Aorta (tissue), 5 donors: ENCODE measurements at regions of chr14 and their contacts with region 1.

Region 1: DNA sequence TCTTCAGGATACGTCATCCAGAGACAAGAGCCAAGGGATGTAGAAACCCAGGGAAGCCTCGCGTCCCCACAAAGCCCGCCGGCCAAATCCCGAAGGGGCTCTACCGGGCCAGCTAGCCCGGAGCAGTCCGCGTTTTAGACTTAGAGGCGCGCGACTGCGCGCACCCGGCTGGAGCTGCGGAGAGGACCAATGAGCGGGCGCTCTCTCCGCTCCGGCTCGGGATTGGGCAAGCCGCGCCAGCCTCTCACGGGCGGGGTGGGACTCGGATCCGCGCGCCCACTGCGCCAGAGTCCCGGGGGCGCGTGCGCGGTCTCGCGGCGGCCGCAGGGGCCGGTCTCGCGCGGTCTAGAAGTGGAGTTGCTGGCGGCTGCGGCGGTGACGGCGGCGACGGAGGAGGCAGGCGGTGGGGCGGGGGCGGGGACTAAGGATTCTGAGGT is 239 bp upstream of the PALS1 start:
- DNase-seq: peak; percentile 98 to 99
- ATAC-seq: peak; percentile 99
- H3K4me3 ChIP-seq: peak overlapping the region; percentile 60 to 76
- H3K27ac ChIP-seq: peak overlapping the region in 1 of 2 donors; percentile 74
- H3K4me1 ChIP-seq: no peaks in the 10 kb centered on the region
- H3K27me3 ChIP-seq: no peaks in the 10 kb centered on the region

Region 2: GRCh38 chr14:66509874-66510273 is 731.1 kb before region 1 on chr14:
- intact Hi-C with region 1: loop called in 1 of 2 experiments (anchors 5 kb)
- DNase-seq: no peak
- ATAC-seq: no peak
- H3K4me3 ChIP-seq: peak overlapping the region; percentile 80 to 81
- H3K27ac ChIP-seq: no peak overlapping the region
- H3K4me1 ChIP-seq: no peaks in the 10 kb centered on the region
- H3K27me3 ChIP-seq: no peaks in the 10 kb centered on the region

Region 3: DNA sequence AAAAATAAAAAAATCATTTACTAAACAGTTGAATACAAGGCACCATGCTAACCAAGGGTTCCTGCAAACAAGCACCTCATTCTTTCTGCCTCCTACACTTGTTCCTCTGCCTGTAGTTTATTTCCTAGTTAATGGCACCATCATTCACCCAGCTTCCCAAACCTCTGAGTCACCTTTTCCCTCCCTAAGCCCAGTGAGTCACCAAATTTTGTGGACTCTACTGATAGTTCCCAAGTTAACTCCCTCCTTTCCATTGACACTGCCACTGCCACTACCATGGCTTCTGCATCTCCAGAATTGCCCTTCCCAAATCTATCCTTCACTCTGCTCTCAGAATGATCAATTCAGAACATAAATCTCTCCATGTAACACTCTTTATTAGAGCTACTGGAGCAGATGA is 53.8 kb before region 1 on chr14:
- intact Hi-C with region 1: loop called in 1 of 2 experiments (anchors 10 kb)
- DNase-seq: no peak
- ATAC-seq: no peak
- H3K4me3 ChIP-seq: no peak overlapping the region
- H3K27ac ChIP-seq: no peak overlapping the region
- H3K4me1 ChIP-seq: no peaks in the 10 kb centered on the region
- H3K27me3 ChIP-seq: no peaks in the 10 kb centered on the region

Region 4: DNA sequence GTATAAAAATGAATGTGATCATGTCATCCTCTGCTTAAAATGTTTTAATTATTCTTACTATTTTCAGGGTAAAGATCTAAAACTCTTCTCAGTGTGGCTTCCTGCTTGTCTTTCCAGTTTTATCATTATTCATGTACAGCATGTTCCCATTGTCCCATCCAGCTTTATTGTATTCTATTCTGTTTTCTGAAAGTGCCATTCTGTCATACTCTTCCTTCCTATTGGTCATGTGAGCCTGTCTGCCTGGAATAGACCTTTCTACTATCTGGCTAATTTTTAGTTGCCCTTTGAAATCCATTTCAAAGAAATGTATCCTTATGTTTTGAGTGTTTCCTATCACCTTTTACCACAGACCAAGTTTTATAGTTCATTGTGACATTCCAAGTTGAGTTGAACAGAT is 35.1 kb after region 1 on chr14:
- intact Hi-C with region 1: loop called in 1 of 2 experiments (anchors 5 kb)
- DNase-seq: no peak
- ATAC-seq: no peak
- H3K4me3 ChIP-seq: no peak overlapping the region
- H3K27ac ChIP-seq: no peak overlapping the region
- H3K4me1 ChIP-seq: peaks cover 0 to 3% of the 10 kb centered on the region in 2 donors
- H3K27me3 ChIP-seq: no peaks in the 10 kb centered on the region

Region 5: DNA sequence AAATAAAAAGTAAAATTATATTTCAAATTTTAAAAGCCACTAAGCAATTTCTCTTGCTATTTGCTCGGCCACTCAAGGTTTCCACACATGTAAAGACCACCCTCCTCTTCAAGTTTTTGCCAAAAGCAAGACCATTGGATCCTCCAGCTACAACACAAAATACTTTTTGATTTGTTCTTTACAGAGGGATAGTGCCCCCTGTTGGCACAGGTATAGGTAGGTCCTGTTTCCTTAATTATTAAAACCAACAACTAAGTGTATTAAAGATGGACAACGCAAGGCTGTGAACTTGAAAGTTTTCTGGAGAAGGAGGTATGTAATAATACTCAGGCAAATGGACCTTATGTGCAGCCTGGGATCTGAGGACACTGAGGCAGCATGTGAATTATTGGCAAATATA is 94.8 kb after region 1 on chr14:
- intact Hi-C with region 1: no loop called
- DNase-seq: no peak
- ATAC-seq: no peak
- H3K4me3 ChIP-seq: no peak overlapping the region
- H3K27ac ChIP-seq: no peak overlapping the region
- H3K4me1 ChIP-seq: no peaks in the 10 kb centered on the region
- H3K27me3 ChIP-seq: peaks cover 0 to 2% of the 10 kb centered on the region in 2 donors

Region 6: GRCh38 chr14:67359775-67360648 is 119.0 kb after region 1 on chr14 and contains the starts of genes ATP6V1D and EIF2S1:
- intact Hi-C with region 1: loop called in 1 of 2 experiments (anchors 5 kb)
- DNase-seq: peak; percentile 100
- ATAC-seq: peak; percentile 100
- H3K4me3 ChIP-seq: peak within 1 kb of the TSS; percentile 87 to 98
- H3K27ac ChIP-seq: peak within 1 kb of the TSS in 1 of 2 donors; percentile 78
- H3K4me1 ChIP-seq: peaks cover 0 to 5% of the 10 kb centered on the region in 2 donors
- H3K27me3 ChIP-seq: no peaks in the 10 kb centered on the region
- total RNA-seq, gene ATP6V1D: 47.7 to 50.3 TPM
- total RNA-seq, gene EIF2S1: 56.8 to 61.4 TPM

Region 7: GRCh38 chr14:67387195-67387594 is 146.2 kb after region 1 on chr14:
- intact Hi-C with region 1: no loop called
- DNase-seq: no peak
- ATAC-seq: no peak
- H3K4me3 ChIP-seq: no peak overlapping the region
- H3K27ac ChIP-seq: no peak overlapping the region
- H3K4me1 ChIP-seq: no peaks in the 10 kb centered on the region
- H3K27me3 ChIP-seq: no peaks in the 10 kb centered on the region